ENCODE measurements at regions of chr11 and their contacts with region 1.

Region 1: GRCh38 chr11:108467091-108467823 is at the start of gene C11orf65:
- DNase-seq: peak; percentile 98
- ATAC-seq: peak; percentile 96
- H3K4me3 ChIP-seq: peak within 1 kb of the TSS; percentile 79 to 96 (median 87)
- H3K4me3 Mint-ChIP-seq: peak within 1 kb of the TSS; percentile 98
- H3K27ac ChIP-seq: peak within 1 kb of the TSS; percentile 97 to 98
- H3K27ac Mint-ChIP-seq: peak within 1 kb of the TSS; percentile 99
- H3K4me1 ChIP-seq: peaks cover 0 to 11% of the 10 kb centered on the region in 2 donors
- H3K4me1 Mint-ChIP-seq: peaks cover 16% of the 10 kb centered on the region
- H3K27me3 ChIP-seq: no peaks in the 10 kb centered on the region
- H3K27me3 Mint-ChIP-seq: no peaks in the 10 kb centered on the region
- CTCF ChIP-seq: no peak
- total RNA-seq, gene C11orf65: 1.4 and 1.7 TPM in 2 replicates

Region 2: GRCh38 chr11:108324587-108324986 is 142.7 kb before region 1 on chr11:
- CTCF ChIA-PET with region 1: no interaction called
- POLR2A ChIA-PET with region 1: no interaction called
- intact Hi-C with region 1: no loop called
- DNase-seq: no peak
- ATAC-seq: no peak
- H3K4me3 ChIP-seq: no peak overlapping the region
- H3K4me3 Mint-ChIP-seq: no peak overlapping the region
- H3K27ac ChIP-seq: no peak overlapping the region
- H3K27ac Mint-ChIP-seq: no peak overlapping the region
- H3K4me1 ChIP-seq: no peaks in the 10 kb centered on the region
- H3K4me1 Mint-ChIP-seq: no peaks in the 10 kb centered on the region
- H3K27me3 ChIP-seq: no peaks in the 10 kb centered on the region
- H3K27me3 Mint-ChIP-seq: no peaks in the 10 kb centered on the region
- CTCF ChIP-seq: no peak

Region 3: DNA sequence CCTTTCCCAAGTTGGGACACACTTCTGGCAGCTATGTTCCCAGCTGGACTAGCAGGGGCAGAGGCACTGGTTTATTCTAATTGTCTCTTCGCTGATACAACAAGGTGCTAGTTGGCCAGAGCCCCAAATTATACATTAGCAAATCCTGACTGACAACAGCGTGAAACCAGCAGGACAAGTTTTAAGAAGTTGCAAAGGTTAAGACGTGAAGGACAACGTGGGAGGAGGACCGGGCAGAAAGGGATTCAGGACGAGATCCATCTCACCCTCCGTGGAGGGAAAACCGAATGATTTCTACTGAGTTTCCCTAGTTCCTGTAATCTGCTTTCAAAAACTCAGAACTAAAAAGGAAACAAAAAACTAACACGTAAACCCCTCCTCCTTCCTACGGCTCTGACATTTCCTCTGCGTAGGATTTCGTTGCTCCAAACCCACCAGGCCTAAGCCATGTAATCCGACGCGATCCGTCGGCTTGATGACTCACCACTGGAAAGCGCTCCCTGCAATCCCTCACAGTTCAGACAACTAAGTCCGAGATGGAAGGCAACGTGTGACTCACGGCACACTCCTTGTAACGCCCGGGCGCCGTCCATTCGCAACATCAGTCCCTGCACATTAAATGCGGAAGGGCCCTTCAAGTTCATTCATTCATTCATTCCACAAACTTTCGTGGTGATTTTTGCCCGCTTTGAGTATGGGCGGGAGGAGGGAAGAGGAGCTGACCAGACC is 30.2 kb after region 1 on chr11:
- CTCF ChIA-PET with region 1: interaction called, 3 read pairs
- POLR2A ChIA-PET with region 1: no interaction called
- intact Hi-C with region 1: loop called (anchors 1 kb)
- DNase-seq: peak; percentile 80
- ATAC-seq: peak; percentile 67
- H3K4me3 ChIP-seq: peak overlapping the region; percentile 71 to 93 (median 80)
- H3K4me3 Mint-ChIP-seq: peak overlapping the region; percentile 100
- H3K27ac ChIP-seq: peak overlapping the region; percentile 71 to 80
- H3K27ac Mint-ChIP-seq: peak overlapping the region; percentile 98
- H3K4me1 ChIP-seq: peaks cover 0 to 7% of the 10 kb centered on the region in 2 donors
- H3K4me1 Mint-ChIP-seq: peaks cover 13% of the 10 kb centered on the region
- H3K27me3 ChIP-seq: no peaks in the 10 kb centered on the region
- H3K27me3 Mint-ChIP-seq: no peaks in the 10 kb centered on the region
- CTCF ChIP-seq: no peak

Region 4: GRCh38 chr11:108593214-108593922 is 126.1 kb after region 1 on chr11 and contains the start of gene EXPH5:
- CTCF ChIA-PET with region 1: no interaction called
- POLR2A ChIA-PET with region 1: no interaction called
- intact Hi-C with region 1: loop called (anchors 10 kb)
- DNase-seq: peak; percentile 79
- ATAC-seq: peak; percentile 95
- H3K4me3 ChIP-seq: peak within 1 kb of the TSS; percentile 57 to 81 (median 73)
- H3K4me3 Mint-ChIP-seq: peak within 1 kb of the TSS; percentile 97
- H3K27ac ChIP-seq: no peak within 1 kb of the TSS
- H3K27ac Mint-ChIP-seq: peak within 1 kb of the TSS; percentile 80
- H3K4me1 ChIP-seq: peaks cover 8 to 9% of the 10 kb centered on the region in 2 donors
- H3K4me1 Mint-ChIP-seq: peaks cover 16% of the 10 kb centered on the region
- H3K27me3 ChIP-seq: peaks cover 0 to 29% (median 14%) of the 10 kb centered on the region in 4 experiments
- H3K27me3 Mint-ChIP-seq: peaks cover 46% of the 10 kb centered on the region
- CTCF ChIP-seq: no peak
- total RNA-seq, gene EXPH5: 0.37 and 0.66 TPM in 2 replicates

Region 5: GRCh38 chr11:108768370-108768769 is 301.1 kb after region 1 on chr11:
- CTCF ChIA-PET with region 1: no interaction called
- POLR2A ChIA-PET with region 1: no interaction called
- intact Hi-C with region 1: no loop called
- DNase-seq: no peak
- ATAC-seq: no peak
- H3K4me3 ChIP-seq: no peak overlapping the region
- H3K4me3 Mint-ChIP-seq: no peak overlapping the region
- H3K27ac ChIP-seq: no peak overlapping the region
- H3K27ac Mint-ChIP-seq: no peak overlapping the region
- H3K4me1 ChIP-seq: no peaks in the 10 kb centered on the region
- H3K4me1 Mint-ChIP-seq: no peaks in the 10 kb centered on the region
- H3K27me3 ChIP-seq: no peaks in the 10 kb centered on the region
- H3K27me3 Mint-ChIP-seq: no peaks in the 10 kb centered on the region
- CTCF ChIP-seq: no peak